Aorta (tissue), 5 donors: ENCODE measurements at regions of chr12 and their contacts with region 1.

Region 1: DNA sequence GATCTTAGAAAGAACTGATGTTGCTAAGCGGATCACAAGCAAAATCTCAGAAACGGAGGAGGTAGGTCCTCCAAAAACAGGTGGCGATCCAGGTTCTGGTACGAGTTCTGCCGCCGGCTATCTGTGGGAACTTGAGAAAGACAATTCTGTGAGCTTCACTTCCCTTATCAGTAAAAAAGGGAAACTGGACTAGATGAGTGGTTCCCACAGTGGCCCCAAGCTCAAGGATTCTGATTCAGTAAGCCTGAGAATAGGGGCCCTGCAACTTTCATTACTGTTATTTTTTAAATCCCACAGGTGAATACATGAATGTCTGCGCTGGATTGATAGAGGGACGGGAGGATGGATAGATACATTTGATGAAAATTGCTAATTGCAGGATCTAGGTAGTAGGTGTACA is 160.2 kb downstream of the PPM1H start:
- DNase-seq: no peak
- ATAC-seq: no peak
- H3K4me3 ChIP-seq: no peak overlapping the region
- H3K27ac ChIP-seq: no peak overlapping the region
- H3K4me1 ChIP-seq: no peaks in the 10 kb centered on the region
- H3K27me3 ChIP-seq: no peaks in the 10 kb centered on the region

Region 2: GRCh38 chr12:62446754-62447452 is 327.9 kb before region 1 on chr12:
- intact Hi-C with region 1: no loop called
- DNase-seq: no peak
- ATAC-seq: no peak
- H3K4me3 ChIP-seq: no peak overlapping the region
- H3K27ac ChIP-seq: no peak overlapping the region
- H3K4me1 ChIP-seq: no peaks in the 10 kb centered on the region
- H3K27me3 ChIP-seq: no peaks in the 10 kb centered on the region

Region 3: GRCh38 chr12:62744551-62744950 is 30.2 kb before region 1 on chr12:
- intact Hi-C with region 1: loop called in 1 of 2 experiments (anchors 5 kb)
- DNase-seq: peak in 1 of 2 donors; percentile 75
- ATAC-seq: peak; percentile 63
- H3K4me3 ChIP-seq: no peak overlapping the region
- H3K27ac ChIP-seq: no peak overlapping the region
- H3K4me1 ChIP-seq: no peaks in the 10 kb centered on the region
- H3K27me3 ChIP-seq: no peaks in the 10 kb centered on the region

Region 4: DNA sequence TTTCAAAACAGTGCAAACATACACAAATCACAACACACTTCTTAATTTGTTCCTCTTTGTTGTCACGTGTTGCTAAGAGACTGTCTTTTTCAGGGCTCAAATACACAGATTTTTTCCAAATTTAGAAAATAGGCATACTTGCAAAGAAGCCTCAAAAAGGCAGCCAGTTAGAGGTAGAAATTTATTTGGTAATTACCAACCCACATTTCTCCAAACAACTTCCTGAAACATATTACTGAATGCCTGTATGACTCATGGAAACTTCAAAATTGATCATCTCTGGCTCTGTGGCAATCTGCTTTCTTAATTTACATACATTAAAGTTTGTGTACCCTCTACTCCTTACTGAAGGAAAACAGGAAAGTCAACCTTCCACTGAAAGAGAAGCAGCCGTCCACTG is 123.7 kb after region 1 on chr12:
- intact Hi-C with region 1: no loop called
- DNase-seq: no peak
- ATAC-seq: no peak
- H3K4me3 ChIP-seq: no peak overlapping the region
- H3K27ac ChIP-seq: no peak overlapping the region
- H3K4me1 ChIP-seq: peaks cover 0 to 2% of the 10 kb centered on the region in 2 donors
- H3K27me3 ChIP-seq: no peaks in the 10 kb centered on the region